GM12878 (cell line): ENCODE measurements at regions of chr1 and their contacts with region 1.

Region 1: GRCh38 chr1:156319664-156320063 is 18.4 kb downstream of the CCT3 start:
- DNase-seq: no peak
- ATAC-seq: no peak
- H3K4me3 ChIP-seq: no peak overlapping the region
- H3K27ac ChIP-seq: no peak overlapping the region
- H3K4me1 ChIP-seq: no peaks in the 10 kb centered on the region
- H3K27me3 ChIP-seq: no peaks in the 10 kb centered on the region
- CTCF ChIP-seq: peak; percentile 41 to 51 (median 46)
- EP300 ChIP-seq: no peak
- POLR2A ChIP-seq: no peak
- RAD21 ChIP-seq: peak; percentile 64

Region 2: DNA sequence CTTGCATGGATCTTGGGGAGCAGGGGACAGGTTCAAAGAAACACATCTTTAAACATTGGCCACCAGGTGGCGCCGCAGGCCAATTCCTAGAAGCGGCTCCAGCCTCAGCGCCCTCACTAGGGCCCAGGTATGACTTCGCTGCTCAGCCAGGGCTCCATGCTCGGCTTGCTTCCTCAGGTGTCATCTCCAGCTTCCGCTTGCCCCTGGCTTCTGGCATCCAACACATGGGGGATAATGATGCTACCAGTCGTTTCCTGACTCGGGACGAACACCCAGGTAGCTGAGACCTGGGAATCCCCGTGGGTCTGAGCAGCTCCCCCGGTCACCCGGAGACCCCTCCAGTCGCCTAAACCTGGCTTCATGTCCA is 228.9 kb before region 1 on chr1:
- CTCF ChIA-PET with region 1: interaction called, 25 read pairs
- POLR2A ChIA-PET with region 1: no interaction called
- RAD21 ChIA-PET with region 1: interaction called, 12 read pairs
- SMC1A ChIA-PET with region 1: no interaction called
- in situ Hi-C with region 1: no loop called
- intact Hi-C with region 1: loop called (anchors 5 kb)
- DNase-seq: no peak
- ATAC-seq: peak; percentile 99
- H3K4me3 ChIP-seq: no peak overlapping the region
- H3K27ac ChIP-seq: no peak overlapping the region
- H3K4me1 ChIP-seq: peaks cover 5% of the 10 kb centered on the region
- H3K27me3 ChIP-seq: no peaks in the 10 kb centered on the region
- CTCF ChIP-seq: peak; percentile 69 to 90 (median 73)
- EP300 ChIP-seq: no peak
- POLR2A ChIP-seq: no peak
- RAD21 ChIP-seq: peak; percentile 92

Region 3: DNA sequence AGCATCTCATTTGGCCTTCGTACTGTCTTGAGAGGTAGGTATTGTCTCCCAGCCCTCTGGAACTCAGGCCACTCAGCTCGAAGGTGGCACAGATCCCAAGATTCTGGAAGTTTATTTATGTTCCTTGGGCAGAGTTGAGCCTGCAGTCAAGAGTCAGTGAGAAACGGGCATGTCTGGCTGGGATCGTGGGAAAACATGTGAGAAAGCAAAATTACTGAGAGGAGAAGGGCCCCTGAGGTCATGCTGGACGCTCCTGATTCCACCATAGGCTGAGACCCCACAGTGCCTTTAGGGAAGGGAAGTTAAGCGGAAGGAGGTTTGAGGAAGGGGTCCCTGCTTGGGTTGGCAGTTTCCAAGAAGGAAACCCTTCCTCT is 178.8 kb before region 1 on chr1:
- CTCF ChIA-PET with region 1: interaction called, 31 read pairs
- POLR2A ChIA-PET with region 1: no interaction called
- RAD21 ChIA-PET with region 1: interaction called, 7 read pairs
- SMC1A ChIA-PET with region 1: interaction called, 19 read pairs
- in situ Hi-C with region 1: loop called (anchors 5 kb)
- intact Hi-C with region 1: loop called (anchors 5 kb)
- DNase-seq: no peak
- ATAC-seq: peak; percentile 6; the same call in 2 of the 3 replicates
- H3K4me3 ChIP-seq: no peak overlapping the region
- H3K27ac ChIP-seq: no peak overlapping the region
- H3K4me1 ChIP-seq: peaks cover 2% of the 10 kb centered on the region; the same call in 1 of the 2 replicates
- H3K27me3 ChIP-seq: no peaks in the 10 kb centered on the region
- CTCF ChIP-seq: no peak
- EP300 ChIP-seq: no peak
- POLR2A ChIP-seq: no peak
- RAD21 ChIP-seq: no peak

Region 4: GRCh38 chr1:156338180-156338973 is 18.7 kb after region 1 on chr1 and contains the starts of genes CCT3 and TSACC:
- CTCF ChIA-PET with region 1: interaction called, 17 read pairs
- POLR2A ChIA-PET with region 1: interaction called, 3 read pairs
- RAD21 ChIA-PET with region 1: interaction called, 5 read pairs
- SMC1A ChIA-PET with region 1: interaction called, 5 read pairs
- in situ Hi-C with region 1: no loop called
- intact Hi-C with region 1: no loop called
- DNase-seq: peak; percentile 100
- ATAC-seq: peak; percentile 96
- H3K4me3 ChIP-seq: peak within 1 kb of the TSS; percentile 96
- H3K27ac ChIP-seq: peak within 1 kb of the TSS; percentile 76
- H3K4me1 ChIP-seq: no peaks in the 10 kb centered on the region
- H3K27me3 ChIP-seq: no peaks in the 10 kb centered on the region
- CTCF ChIP-seq: no peak
- EP300 ChIP-seq: peak; percentile 45 to 75; a peak in 1 of 4 replicates
- POLR2A ChIP-seq: peak; percentile 89
- RAD21 ChIP-seq: no peak
- polyA plus RNA-seq, gene CCT3: 491 to 585 TPM
- polyA plus RNA-seq, gene TSACC: 0.82 to 1.0 TPM